IMR-90 (cell line): ENCODE measurements at regions of chr5 and their contacts with region 1.

Region 1: GRCh38 chr5:136249678-136250266 is 56.8 kb upstream of the SMIM32 start:
- DNase-seq: peak; percentile 70
- ATAC-seq: peak; percentile 98
- H3K4me3 ChIP-seq: no peak overlapping the region
- H3K27ac ChIP-seq: no peak overlapping the region
- H3K4me1 ChIP-seq: no peaks in the 10 kb centered on the region
- H3K27me3 ChIP-seq: peaks cover 2% of the 10 kb centered on the region
- CTCF ChIP-seq: peak; percentile 92
- POLR2A ChIP-seq: no peak
- RAD21 ChIP-seq: peak; percentile 89

Region 2: DNA sequence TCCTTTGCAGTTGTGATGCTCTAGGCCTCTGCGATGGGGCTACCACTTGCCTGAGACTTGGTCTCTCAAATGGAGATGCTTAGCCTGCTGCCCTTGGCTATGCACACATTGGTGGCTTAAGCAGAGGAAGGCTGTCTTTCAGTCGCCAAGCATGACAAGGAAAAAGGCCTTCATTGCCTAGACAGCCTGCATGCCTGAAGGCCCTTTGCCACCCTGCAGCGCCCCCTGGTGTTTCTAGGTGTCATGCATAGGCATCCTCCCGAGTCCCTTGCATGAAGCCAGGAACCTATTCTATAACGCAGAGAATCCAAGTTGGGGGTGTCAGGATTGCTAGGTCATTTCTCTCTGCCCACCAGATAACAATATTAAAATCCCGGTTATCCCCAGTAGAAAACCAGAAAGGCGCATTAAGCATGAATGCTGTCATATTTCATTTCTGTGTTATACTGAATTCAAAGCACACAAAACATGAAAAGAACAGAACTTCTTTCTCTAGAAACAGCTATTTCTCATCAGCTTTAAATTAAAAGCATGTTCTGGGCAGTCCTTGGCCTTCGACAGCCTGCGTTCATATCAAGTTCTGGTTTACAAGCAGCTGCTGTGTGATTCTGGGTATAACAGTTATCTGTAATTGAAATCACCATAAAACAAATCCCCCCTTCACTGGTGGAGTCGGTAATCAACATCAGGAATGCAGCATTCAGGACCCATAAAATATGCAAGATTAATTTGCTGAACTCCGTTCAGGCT is 175.2 kb after region 1 on chr5:
- CTCF ChIA-PET with region 1: no interaction called
- POLR2A ChIA-PET with region 1: no interaction called
- dilution Hi-C with region 1: no loop called
- in situ Hi-C with region 1: loop called (anchors 10 kb)
- intact Hi-C with region 1: loop called (anchors 1 kb)
- DNase-seq: peak; percentile 33
- ATAC-seq: peak; percentile 61; the same call in 1 of the 2 replicates
- H3K4me3 ChIP-seq: no peak overlapping the region
- H3K27ac ChIP-seq: no peak overlapping the region
- H3K4me1 ChIP-seq: no peaks in the 10 kb centered on the region
- H3K27me3 ChIP-seq: no peaks in the 10 kb centered on the region
- CTCF ChIP-seq: peak; percentile 61
- POLR2A ChIP-seq: no peak
- RAD21 ChIP-seq: peak; percentile 58

Region 3: DNA sequence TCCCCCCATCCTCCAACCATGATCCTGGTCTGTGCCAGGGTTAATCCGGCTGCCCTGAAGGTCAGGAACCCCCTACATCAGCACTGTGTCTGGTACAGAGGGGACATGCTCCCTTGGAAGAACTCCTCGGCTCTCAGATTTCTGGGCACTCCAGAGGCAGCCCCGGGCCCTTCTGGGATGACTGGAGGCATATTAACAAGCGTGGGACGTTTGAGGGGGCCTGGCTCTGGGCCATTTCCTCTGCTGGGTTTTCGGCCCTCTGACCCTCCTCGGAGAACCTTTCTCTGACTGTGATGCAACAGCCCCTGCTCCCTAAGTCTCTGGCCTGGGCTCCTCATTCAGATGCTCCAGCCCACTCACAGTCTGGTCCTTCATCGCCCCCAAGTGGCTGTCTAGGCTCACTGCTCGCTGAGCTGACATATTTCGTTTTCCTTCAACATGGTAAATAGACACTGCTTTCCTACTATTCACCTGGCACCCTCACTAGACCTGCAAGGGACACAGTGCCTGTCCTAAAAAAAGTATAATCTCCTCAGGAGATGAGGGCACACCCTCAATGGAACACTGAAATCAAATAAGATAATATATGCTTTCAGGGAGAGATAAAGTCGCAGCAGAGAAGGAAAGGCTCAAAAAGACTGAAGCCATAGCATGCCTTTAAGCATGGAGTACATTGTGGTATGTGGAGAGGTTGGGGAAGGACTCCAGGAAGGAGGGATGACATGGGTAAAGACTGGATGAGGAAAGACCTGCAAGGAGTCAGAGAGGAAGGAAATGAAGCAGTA is 520.3 kb after region 1 on chr5:
- CTCF ChIA-PET with region 1: interaction called, 11 read pairs
- POLR2A ChIA-PET with region 1: no interaction called
- dilution Hi-C with region 1: no loop called
- in situ Hi-C with region 1: loop called (anchors 10 kb)
- intact Hi-C with region 1: loop called (anchors 1 kb)
- DNase-seq: peak; percentile 50
- ATAC-seq: peak; percentile 97
- H3K4me3 ChIP-seq: no peak overlapping the region
- H3K27ac ChIP-seq: no peak overlapping the region
- H3K4me1 ChIP-seq: no peaks in the 10 kb centered on the region
- H3K27me3 ChIP-seq: no peaks in the 10 kb centered on the region
- CTCF ChIP-seq: peak; percentile 79
- POLR2A ChIP-seq: no peak
- RAD21 ChIP-seq: peak; percentile 92

Region 4: DNA sequence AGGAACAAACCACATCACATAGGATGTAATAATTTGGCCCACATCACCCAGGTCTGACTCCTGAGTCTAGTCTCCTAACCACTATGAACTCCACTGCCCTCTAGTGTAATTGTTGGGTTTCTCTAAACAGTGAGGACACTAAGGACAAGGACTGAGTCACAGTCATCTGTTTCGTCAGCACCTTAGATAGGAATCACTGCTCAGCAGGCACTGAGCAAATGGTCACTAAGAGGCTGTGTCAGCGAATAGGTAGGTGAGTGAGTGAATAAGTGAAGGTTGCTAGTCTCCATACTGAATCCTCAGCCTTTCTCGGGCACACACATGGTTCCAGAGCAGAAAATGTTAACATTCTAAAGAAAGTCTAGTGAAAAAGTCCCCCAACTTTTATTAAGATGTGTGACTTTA is 970.8 kb after region 1 on chr5:
- CTCF ChIA-PET with region 1: no interaction called
- POLR2A ChIA-PET with region 1: no interaction called
- dilution Hi-C with region 1: no loop called
- in situ Hi-C with region 1: no loop called
- intact Hi-C with region 1: loop called (anchors 2 kb)
- DNase-seq: peak; percentile 78
- ATAC-seq: peak; percentile 96
- H3K4me3 ChIP-seq: no peak overlapping the region
- H3K27ac ChIP-seq: no peak overlapping the region
- H3K4me1 ChIP-seq: 0 out of 2 replicates have a peak, but pooled peaks cover 2% of the 10 kb centered on the region
- H3K27me3 ChIP-seq: no peaks in the 10 kb centered on the region; the same call in 1 of the 2 replicates
- CTCF ChIP-seq: peak; percentile 66
- POLR2A ChIP-seq: no peak
- RAD21 ChIP-seq: peak; percentile 67

Region 5: GRCh38 chr5:137498736-137499505 is 1249.1 kb after region 1 on chr5 and contains the start of gene SPOCK1:
- CTCF ChIA-PET with region 1: no interaction called
- POLR2A ChIA-PET with region 1: no interaction called
- dilution Hi-C with region 1: no loop called
- in situ Hi-C with region 1: loop called (anchors 10 kb)
- intact Hi-C with region 1: loop called (anchors 1 kb)
- DNase-seq: peak; percentile 63
- ATAC-seq: peak; percentile 98
- H3K4me3 ChIP-seq: peak within 1 kb of the TSS; percentile 52
- H3K27ac ChIP-seq: no peak within 1 kb of the TSS
- H3K4me1 ChIP-seq: no peaks in the 10 kb centered on the region
- H3K27me3 ChIP-seq: peaks cover 15% of the 10 kb centered on the region; the same call in 1 of the 2 replicates
- CTCF ChIP-seq: peak; percentile 96
- POLR2A ChIP-seq: no peak; the same call in 1 of the 2 replicates
- RAD21 ChIP-seq: peak; percentile 94
- total RNA-seq, gene SPOCK1: 5.0 and 8.1 TPM in 2 replicates